Uterus (tissue), 4 donors: ENCODE measurements at regions of chr12 and their contacts with region 1.

Region 1: DNA sequence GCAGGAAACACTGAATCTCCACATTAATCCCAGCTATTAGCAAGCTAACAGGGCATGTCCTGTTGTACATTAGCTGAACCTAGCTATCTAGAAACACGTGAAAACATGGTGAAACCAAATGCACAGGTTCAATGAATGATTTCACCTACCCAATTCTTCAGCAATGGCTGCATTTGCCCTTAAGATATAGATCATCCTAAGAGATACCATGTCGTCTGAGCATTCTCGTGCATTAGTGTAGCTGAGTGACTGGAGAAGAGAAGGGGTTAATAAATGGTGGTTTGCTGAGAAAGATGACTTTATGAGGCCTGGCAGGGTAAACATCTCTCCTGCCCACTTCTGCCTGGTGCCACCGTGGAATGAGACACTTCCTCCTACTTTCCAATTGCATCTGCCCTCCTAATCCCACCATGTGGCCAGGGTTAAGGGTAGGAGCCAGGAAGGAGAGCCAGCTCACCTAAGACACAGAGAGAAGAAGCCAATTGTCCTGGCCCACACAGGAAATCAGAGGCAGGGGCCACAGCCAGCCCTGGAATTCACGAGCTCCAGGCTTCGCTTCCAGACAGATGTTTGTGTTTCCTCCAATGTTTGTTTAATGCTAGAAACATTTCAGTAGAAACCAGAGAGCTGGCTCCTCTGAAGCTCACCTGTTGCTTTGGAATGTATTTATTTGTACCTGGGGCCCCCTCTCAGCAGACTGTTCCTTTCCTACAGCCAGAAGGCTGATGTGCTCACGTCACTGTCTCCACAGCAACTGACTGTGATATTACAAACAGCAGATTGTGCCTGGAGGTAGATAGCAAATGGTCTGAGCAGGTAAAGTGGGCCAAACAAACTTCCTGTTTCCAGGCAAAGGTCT is 126.0 kb upstream of the PARP11 start:
- DNase-seq: no peak
- H3K4me3 ChIP-seq: no peak overlapping the region
- H3K27ac ChIP-seq: no peak overlapping the region
- H3K4me1 ChIP-seq: no peaks in the 10 kb centered on the region
- H3K27me3 ChIP-seq: no peaks in the 10 kb centered on the region
- CTCF ChIP-seq: no peak
- POLR2A ChIP-seq: no peak

Region 2: DNA sequence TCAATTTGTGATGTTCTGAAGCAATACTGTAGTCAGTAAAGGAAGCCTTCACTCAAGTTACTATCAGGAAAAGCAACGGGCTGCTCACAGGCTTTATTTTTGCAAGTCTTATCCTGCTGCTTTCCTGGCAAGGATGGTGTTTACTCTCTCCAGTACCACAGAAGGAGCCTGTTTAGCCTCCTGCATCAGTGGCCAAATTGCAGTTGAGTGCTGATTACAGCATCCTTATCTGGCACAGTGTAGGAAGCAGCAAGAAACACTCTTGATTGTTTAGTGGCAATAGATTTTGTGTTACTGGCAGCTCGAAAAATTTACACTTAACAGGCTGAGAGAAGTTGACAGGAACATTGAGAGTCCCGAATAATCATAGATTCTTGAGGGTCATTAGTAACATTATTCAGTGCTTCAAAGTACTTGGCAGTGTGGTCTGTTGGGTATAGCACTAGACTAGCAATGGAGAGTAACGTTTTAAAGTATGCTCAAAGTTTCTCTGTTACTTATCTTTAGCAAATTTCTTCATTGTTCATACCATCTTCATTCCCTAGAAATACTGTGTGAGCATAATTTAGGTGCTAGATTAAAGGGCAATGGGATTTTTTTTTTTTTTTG is 1096.8 kb before region 1 on chr12:
- intact Hi-C with region 1: no loop called
- DNase-seq: peak; percentile 28 to 39
- H3K4me3 ChIP-seq: no peak overlapping the region
- H3K27ac ChIP-seq: no peak overlapping the region
- H3K4me1 ChIP-seq: no peaks in the 10 kb centered on the region
- H3K27me3 ChIP-seq: no peaks in the 10 kb centered on the region
- CTCF ChIP-seq: no peak
- POLR2A ChIP-seq: no peak

Region 3: DNA sequence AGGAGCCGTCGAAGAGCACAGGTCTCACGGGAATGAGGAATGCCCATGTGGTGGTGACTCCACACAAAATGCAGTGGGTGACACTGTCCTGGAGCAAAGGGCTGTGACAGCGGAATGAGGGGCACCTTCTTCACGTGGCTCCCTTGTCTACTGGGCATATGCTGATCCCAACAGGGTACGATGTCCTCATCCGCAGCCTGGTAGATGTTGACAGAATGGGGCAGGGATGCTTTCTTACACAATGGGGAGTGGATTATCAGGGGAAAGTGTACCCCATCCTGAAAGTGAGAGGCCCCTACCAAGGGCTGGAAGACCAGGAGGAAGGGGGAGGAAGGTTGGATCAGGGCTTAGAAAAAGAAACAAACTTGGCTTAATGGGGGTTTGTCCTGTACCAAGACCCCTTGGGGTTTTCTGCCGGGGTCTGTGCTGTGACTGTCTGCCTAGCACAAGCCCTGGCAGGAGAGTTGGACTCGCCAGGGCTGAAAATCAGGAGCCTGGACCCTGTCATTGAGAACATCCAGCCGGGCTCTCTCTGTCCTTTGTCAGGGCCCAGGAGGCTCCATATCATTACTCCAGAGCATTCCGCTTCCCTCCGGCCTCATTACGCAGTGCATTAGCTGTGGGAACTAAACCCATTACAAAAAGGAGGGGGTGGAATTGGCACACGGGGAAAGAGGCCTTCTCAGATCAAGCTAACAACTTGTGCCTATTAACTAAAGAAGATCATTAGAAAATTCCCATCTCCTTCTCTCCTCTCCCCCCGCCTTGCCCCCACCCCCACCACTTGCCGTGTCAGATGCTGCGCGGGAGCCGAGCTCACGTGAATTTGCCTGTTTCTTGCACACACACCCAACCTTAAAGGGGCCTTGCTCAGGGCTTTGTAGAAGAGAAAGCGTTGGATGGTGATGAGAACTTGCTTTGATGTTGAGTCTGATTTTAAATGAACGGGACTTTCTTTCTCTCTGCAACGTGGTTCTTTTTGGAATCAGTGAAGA is 45.8 kb after region 1 on chr12:
- intact Hi-C with region 1: loop called (anchors 10 kb)
- DNase-seq: no peak
- H3K4me3 ChIP-seq: no peak overlapping the region
- H3K27ac ChIP-seq: no peak overlapping the region
- H3K4me1 ChIP-seq: no peaks in the 10 kb centered on the region
- H3K27me3 ChIP-seq: no peaks in the 10 kb centered on the region
- CTCF ChIP-seq: no peak
- POLR2A ChIP-seq: no peak